ENCODE measurements at regions of chr4 and their contacts with region 1.

Region 1: DNA sequence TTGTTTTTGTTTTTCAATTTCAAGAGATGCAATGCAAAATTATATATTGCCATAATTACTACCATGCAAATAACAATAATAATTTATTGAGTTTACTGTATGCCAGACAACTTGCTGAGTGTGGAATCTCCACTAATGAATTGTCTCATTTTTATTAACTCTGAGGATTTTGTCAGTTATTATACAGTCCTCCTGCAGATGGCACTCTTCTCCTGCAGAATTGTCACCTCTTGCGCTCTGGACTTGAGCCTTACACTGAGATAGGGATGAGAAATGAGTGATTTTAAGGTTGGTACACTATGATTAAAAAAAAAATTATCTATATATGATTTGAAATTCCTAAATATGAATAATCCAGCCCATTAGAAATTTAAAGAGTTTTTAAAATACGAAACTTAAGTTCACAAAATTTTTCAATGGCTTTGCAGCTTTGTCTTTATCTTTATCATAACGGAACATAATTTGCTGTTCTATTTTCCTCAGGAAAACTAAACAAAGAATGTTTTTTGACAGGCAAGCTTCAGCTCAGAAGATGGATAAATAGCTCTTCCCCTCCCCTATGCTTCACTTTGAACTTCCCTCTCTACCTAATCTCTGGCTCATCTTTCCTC is 12.7 kb upstream of the PAQR3 start:
- DNase-seq: peak in 4 of 9 experiments; percentile 23 to 64 (median 42)
- ATAC-seq: peak; percentile 59
- H3K4me3 ChIP-seq: no peak overlapping the region
- H3K4me3 Mint-ChIP-seq: no peak overlapping the region
- H3K27ac ChIP-seq: no peak overlapping the region
- H3K27ac Mint-ChIP-seq: no peak overlapping the region
- H3K4me1 ChIP-seq: no peaks in the 10 kb centered on the region
- H3K4me1 Mint-ChIP-seq: no peaks in the 10 kb centered on the region
- H3K27me3 ChIP-seq: no peaks in the 10 kb centered on the region
- H3K27me3 Mint-ChIP-seq: peaks cover 13% of the 10 kb centered on the region
- CTCF ChIP-seq: peak; percentile 88

Region 2: DNA sequence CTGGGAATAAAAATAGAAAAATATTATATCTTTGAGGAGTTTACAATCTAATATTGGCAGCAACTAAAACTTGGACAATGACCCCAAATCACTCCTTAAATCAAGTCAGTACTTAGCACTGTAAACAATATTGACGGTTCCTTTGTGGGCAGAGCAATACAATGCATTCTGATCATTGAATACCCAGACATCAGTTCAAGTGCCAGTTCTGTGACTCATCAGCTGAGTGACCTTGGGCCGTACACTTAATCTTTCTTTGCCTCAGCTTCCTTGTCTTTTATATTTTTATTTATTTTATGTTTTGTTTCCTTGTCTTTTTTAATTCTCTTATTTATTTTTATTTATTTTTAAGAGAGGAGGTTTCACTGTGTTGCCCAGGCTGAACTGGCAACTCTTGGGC is 512.6 kb before region 1 on chr4:
- CTCF ChIA-PET with region 1: no interaction called
- POLR2A ChIA-PET with region 1: no interaction called
- intact Hi-C with region 1: no loop called
- DNase-seq: no peak
- ATAC-seq: no peak
- H3K4me3 ChIP-seq: no peak overlapping the region
- H3K4me3 Mint-ChIP-seq: no peak overlapping the region
- H3K27ac ChIP-seq: no peak overlapping the region
- H3K27ac Mint-ChIP-seq: no peak overlapping the region
- H3K4me1 ChIP-seq: no peaks in the 10 kb centered on the region
- H3K4me1 Mint-ChIP-seq: no peaks in the 10 kb centered on the region
- H3K27me3 ChIP-seq: no peaks in the 10 kb centered on the region
- H3K27me3 Mint-ChIP-seq: no peaks in the 10 kb centered on the region
- CTCF ChIP-seq: no peak

Region 3: DNA sequence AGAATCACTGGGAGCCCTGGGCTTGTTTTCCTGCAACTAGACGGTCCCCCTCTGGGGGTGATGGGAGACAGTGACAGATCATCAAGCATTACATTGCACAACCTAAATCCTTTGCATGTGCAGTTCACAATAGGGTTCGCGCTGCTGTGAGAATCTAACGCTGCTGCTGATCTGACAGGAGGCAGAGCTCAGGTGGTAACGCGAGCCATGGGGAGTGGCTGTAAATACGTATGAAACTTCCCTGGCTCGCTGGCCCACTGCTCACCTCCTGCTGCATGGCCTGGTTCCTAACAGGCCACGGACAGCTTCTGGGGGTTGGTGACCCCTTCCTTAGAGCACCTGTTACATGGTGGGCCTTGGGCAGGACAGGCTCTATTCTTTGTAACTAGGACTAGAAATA is 23.1 kb before region 1 on chr4:
- CTCF ChIA-PET with region 1: no interaction called
- POLR2A ChIA-PET with region 1: no interaction called
- intact Hi-C with region 1: no loop called
- DNase-seq: no peak
- ATAC-seq: no peak
- H3K4me3 ChIP-seq: no peak overlapping the region
- H3K4me3 Mint-ChIP-seq: no peak overlapping the region
- H3K27ac ChIP-seq: no peak overlapping the region
- H3K27ac Mint-ChIP-seq: no peak overlapping the region
- H3K4me1 ChIP-seq: no peaks in the 10 kb centered on the region
- H3K4me1 Mint-ChIP-seq: peaks cover 4% of the 10 kb centered on the region
- H3K27me3 ChIP-seq: no peaks in the 10 kb centered on the region
- H3K27me3 Mint-ChIP-seq: no peaks in the 10 kb centered on the region
- CTCF ChIP-seq: no peak

Region 4: DNA sequence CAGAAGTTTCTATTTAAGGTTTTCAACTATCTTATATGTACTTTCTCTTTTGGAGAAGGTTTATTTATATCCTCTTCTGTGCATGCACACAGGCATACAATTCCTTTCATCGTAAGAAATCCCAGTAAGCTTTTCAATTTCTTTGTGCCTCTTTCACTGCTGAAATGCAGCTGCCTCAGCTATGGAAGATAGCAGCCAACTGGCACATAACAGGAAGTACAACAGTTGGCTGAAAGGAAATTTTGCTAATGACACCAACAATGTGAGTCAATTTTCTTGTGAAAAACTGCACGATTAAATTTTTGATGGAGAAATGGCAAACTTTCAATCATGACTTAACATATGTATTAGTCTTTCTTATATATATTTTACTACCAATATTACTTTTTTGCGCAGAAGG is 61.8 kb after region 1 on chr4:
- CTCF ChIA-PET with region 1: no interaction called
- POLR2A ChIA-PET with region 1: no interaction called
- intact Hi-C with region 1: no loop called
- DNase-seq: no peak
- ATAC-seq: no peak
- H3K4me3 ChIP-seq: no peak overlapping the region
- H3K4me3 Mint-ChIP-seq: no peak overlapping the region
- H3K27ac ChIP-seq: no peak overlapping the region
- H3K27ac Mint-ChIP-seq: no peak overlapping the region
- H3K4me1 ChIP-seq: no peaks in the 10 kb centered on the region
- H3K4me1 Mint-ChIP-seq: no peaks in the 10 kb centered on the region
- H3K27me3 ChIP-seq: no peaks in the 10 kb centered on the region
- H3K27me3 Mint-ChIP-seq: peaks cover 3% of the 10 kb centered on the region
- CTCF ChIP-seq: no peak

Region 5: GRCh38 chr4:79576429-79576753 is 624.4 kb after region 1 on chr4:
- CTCF ChIA-PET with region 1: interaction called, 3 read pairs
- POLR2A ChIA-PET with region 1: no interaction called
- intact Hi-C with region 1: loop called in 1 of 2 experiments (anchors 5 kb)
- DNase-seq: peak in 2 of 9 experiments; percentile 3 to 5
- ATAC-seq: no peak
- H3K4me3 ChIP-seq: no peak overlapping the region
- H3K4me3 Mint-ChIP-seq: no peak overlapping the region
- H3K27ac ChIP-seq: no peak overlapping the region
- H3K27ac Mint-ChIP-seq: no peak overlapping the region
- H3K4me1 ChIP-seq: no peaks in the 10 kb centered on the region
- H3K4me1 Mint-ChIP-seq: no peaks in the 10 kb centered on the region
- H3K27me3 ChIP-seq: no peaks in the 10 kb centered on the region
- H3K27me3 Mint-ChIP-seq: no peaks in the 10 kb centered on the region
- CTCF ChIP-seq: no peak